Body of pancreas (tissue), 4 donors: ENCODE measurements at regions of chr19 and their contacts with region 1.

Region 1: GRCh38 chr19:4267101-4267900 is 11.8 kb upstream of the SHD start:
- DNase-seq: peak; percentile 39 to 66 (median 60)
- ATAC-seq: peak; percentile 47
- H3K4me3 ChIP-seq: no peak overlapping the region
- H3K27ac ChIP-seq: peak overlapping the region in 2 of 4 donors; percentile 59 to 63
- H3K4me1 ChIP-seq: peaks cover 17% of the 10 kb centered on the region
- H3K27me3 ChIP-seq: no peaks in the 10 kb centered on the region
- CTCF ChIP-seq: peak; percentile 62 to 93 (median 69)
- POLR2A ChIP-seq: no peak

Region 2: DNA sequence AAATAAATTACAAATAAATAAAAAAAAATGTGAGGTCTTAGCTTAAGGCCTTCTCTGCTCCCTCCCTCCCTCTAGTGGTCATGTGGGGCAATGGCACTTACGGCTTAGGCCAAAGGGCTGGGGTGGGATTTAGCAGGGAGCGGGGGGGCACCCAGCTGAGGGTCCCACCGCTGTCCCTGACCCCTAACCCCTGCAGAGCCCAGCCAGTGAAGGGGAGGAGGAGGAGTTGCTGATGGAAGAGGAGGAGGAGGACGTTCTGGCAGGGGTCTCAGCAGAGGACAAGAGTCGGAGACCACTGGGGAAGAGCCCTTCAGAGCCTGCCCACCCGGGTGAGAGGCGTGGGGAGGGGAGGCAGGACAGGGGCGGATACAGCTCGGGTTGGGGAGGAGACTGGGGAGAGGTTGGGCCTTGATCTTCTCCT is 85.4 kb after region 1 on chr19:
- intact Hi-C with region 1: loop called (anchors 5 kb)
- DNase-seq: peak in 1 of 4 donors; percentile 51
- ATAC-seq: peak; percentile 67
- H3K4me3 ChIP-seq: no peak overlapping the region
- H3K27ac ChIP-seq: no peak overlapping the region
- H3K4me1 ChIP-seq: no peaks in the 10 kb centered on the region
- H3K27me3 ChIP-seq: no peaks in the 10 kb centered on the region
- CTCF ChIP-seq: peak; percentile 43 to 97 (median 85)
- POLR2A ChIP-seq: no peak

Region 3: GRCh38 chr19:4369888-4370260 is 102.6 kb after region 1 on chr19:
- intact Hi-C with region 1: no loop called
- DNase-seq: peak in 2 of 4 donors; percentile 24 to 55
- ATAC-seq: no peak
- H3K4me3 ChIP-seq: no peak overlapping the region
- H3K27ac ChIP-seq: peak overlapping the region in 3 of 4 donors; percentile 58 to 77 (median 64)
- H3K4me1 ChIP-seq: peaks cover 70% of the 10 kb centered on the region
- H3K27me3 ChIP-seq: no peaks in the 10 kb centered on the region
- CTCF ChIP-seq: peak in 4 of 7 experiments; percentile 3 to 25 (median 12)
- POLR2A ChIP-seq: no peak